Heart right ventricle (tissue), 16 donors: ENCODE measurements at regions of chr10 and their contacts with region 1.

Region 1: GRCh38 chr10:100433253-100434240 is 29.3 kb upstream of the WNT8B start:
- DNase-seq: peak; percentile 83 to 90
- ATAC-seq: peak; percentile 77 to 95 (median 90)
- H3K4me3 ChIP-seq: no peak overlapping the region
- H3K27ac ChIP-seq: no peak overlapping the region
- H3K4me1 ChIP-seq: no peaks in the 10 kb centered on the region
- H3K27me3 ChIP-seq: peaks cover 0 to 7% (median 0%) of the 10 kb centered on the region in 7 donors
- CTCF ChIP-seq: peak; percentile 97 to 100 (median 99)

Region 2: DNA sequence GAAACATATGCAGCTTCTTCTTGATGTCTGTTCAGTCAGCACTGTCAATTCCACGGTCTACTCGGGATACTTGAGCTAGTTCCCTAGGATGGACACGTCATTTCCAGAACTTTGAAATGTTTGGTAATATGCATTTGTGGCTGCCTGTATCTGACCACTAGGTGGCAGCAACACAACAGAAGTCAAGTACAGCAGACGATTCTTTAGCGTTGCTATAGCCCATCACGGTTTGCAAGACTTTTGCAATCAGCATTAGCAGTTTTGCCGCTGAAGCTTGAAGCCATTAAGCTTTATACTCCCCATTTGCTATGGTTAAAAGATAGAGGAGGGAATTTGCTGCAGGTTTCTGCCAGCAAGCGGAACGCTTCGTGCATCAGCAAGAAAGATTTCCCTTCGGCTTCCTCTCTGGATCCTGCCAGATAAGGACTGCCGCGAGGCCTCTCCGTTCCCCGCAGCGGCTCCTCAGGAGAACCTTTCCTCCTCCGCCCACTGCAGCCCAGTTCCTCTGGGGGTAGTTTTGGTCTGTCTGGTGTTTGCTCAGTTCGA is 587.6 kb before region 1 on chr10:
- intact Hi-C with region 1: no loop called
- DNase-seq: peak; percentile 34 to 82
- ATAC-seq: peak; percentile 85 to 97 (median 94)
- H3K4me3 ChIP-seq: peak overlapping the region; percentile 4 to 51 (median 35)
- H3K27ac ChIP-seq: no peak overlapping the region
- H3K4me1 ChIP-seq: peaks cover 0 to 12% (median 6%) of the 10 kb centered on the region in 9 donors
- H3K27me3 ChIP-seq: no peaks in the 10 kb centered on the region
- CTCF ChIP-seq: peak; percentile 89 to 95 (median 90)

Region 3: DNA sequence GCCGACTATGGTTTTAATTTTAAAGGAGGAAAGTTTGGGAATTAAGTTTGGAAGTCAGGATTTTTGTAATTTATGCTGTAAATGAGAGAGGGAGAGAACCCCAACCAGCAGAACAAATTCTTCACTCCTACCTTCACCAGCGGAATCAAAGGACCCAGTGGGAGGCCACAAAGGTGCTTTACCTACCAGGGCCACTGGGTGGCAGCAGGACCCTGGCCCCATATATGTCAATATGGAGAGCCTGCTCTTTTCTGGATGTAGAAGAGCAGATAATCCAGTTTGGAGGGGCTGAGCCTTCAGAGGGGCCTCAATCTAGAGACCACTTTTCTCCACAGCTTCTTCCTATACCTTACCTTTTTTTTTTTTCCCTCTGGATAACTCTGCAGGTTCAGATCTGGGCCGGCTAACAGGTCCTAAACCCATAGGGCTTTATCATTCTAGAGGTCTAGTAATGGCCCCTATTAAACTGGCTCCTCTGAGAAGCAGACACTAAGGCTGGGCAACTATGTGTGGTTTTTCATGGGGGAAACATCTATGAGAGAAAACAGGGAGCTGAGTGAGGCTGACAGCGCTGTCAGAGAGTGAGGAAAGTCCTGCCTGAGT is 95.0 kb before region 1 on chr10:
- intact Hi-C with region 1: loop called (anchors 1 to 2 kb)
- DNase-seq: peak; percentile 72 to 75
- ATAC-seq: peak; percentile 53 to 80 (median 74)
- H3K4me3 ChIP-seq: no peak overlapping the region
- H3K27ac ChIP-seq: no peak overlapping the region
- H3K4me1 ChIP-seq: peaks cover 0 to 28% (median 0%) of the 10 kb centered on the region in 9 donors
- H3K27me3 ChIP-seq: peaks cover 0 to 30% (median 16%) of the 10 kb centered on the region in 7 donors
- CTCF ChIP-seq: peak; percentile 86 to 95 (median 92)

Region 4: DNA sequence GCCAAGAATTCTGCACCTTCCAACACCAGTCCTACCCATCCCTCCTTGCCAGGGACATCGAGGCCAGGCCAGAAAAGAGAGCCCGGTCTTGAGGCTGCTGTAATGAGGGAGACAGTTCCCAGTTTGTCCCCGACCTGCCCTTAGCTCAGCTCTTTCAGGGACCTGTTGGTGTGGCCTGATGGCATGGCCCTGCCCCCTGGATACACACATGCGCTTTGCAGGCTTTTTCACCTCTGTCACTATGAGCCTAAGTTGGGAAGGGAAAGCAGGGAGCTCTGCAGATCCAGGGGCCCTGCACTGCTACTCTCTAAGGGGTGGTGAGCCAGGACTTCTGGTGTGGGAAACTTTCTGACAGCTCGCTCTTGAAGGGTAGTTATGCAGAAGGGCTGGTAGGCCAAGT is 84.5 kb before region 1 on chr10:
- intact Hi-C with region 1: no loop called
- DNase-seq: no peak
- ATAC-seq: no peak
- H3K4me3 ChIP-seq: no peak overlapping the region
- H3K27ac ChIP-seq: no peak overlapping the region
- H3K4me1 ChIP-seq: peaks cover 0 to 27% (median 19%) of the 10 kb centered on the region in 9 donors
- H3K27me3 ChIP-seq: peaks cover 0 to 40% (median 8%) of the 10 kb centered on the region in 7 donors
- CTCF ChIP-seq: no peak

Region 5: DNA sequence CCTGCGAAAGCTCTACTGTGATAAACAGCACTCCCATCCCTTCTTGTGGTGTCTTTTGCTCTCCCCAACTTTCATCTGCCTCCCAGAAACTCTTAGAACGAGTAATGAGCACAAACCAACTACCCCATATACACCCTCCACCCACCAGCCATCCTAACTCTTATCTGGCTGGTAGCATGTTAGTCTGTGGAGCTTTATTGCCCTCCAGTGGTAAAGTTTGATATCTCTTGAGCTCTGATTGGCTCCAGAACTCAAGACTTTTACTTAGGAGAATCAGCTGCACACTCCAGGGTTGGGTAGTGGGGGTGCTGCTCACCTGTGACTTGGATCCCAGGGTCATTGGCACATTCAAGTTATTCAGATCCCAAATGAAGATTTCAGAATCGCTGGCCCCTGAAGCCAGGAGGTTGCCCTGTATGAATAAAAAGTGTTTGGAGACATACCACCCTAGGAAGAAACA is 75.2 kb after region 1 on chr10:
- intact Hi-C with region 1: loop called in 3 of 10 experiments (anchors 10 kb)
- DNase-seq: no peak
- ATAC-seq: peak in 1 of 8 donors; percentile 16
- H3K4me3 ChIP-seq: no peak overlapping the region
- H3K27ac ChIP-seq: peak overlapping the region in 1 of 10 donors; percentile 57
- H3K4me1 ChIP-seq: peaks cover 0 to 35% (median 0%) of the 10 kb centered on the region in 9 donors
- H3K27me3 ChIP-seq: no peaks in the 10 kb centered on the region
- CTCF ChIP-seq: peak in 5 of 9 donors; percentile 17 to 52 (median 29)

Region 6: DNA sequence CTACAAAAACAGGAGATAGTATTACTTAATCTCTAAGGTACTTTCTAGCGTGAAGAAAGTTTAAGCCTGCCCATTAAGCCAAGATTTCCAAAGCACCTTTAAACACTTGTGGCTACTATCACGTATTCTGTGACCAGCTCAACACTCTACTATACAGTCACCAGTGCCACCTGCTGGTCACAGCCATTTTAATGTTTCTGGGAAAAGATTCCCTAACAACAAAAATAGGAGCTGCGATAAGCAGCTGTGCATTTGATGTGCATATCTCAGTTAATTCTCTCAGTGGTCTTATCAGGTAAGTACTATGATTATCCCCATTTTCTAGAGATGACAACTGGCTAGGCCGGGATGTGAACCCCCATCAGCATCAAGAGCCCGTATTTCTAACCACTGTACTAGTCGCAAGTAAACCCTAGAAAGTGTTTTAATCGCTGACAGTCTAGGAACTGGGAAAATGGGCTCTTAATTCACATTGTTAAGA is 85.3 kb after region 1 on chr10:
- intact Hi-C with region 1: loop called in 7 of 10 experiments (anchors 2 to 10 kb)
- DNase-seq: peak in 1 of 2 donors; percentile 65
- ATAC-seq: peak; percentile 58 to 86 (median 76)
- H3K4me3 ChIP-seq: peak overlapping the region; percentile 49 to 70 (median 58)
- H3K27ac ChIP-seq: peak overlapping the region in 9 of 10 donors; percentile 26 to 70 (median 56)
- H3K4me1 ChIP-seq: peaks cover 0 to 19% (median 14%) of the 10 kb centered on the region in 9 donors
- H3K27me3 ChIP-seq: peaks cover 0 to 13% (median 0%) of the 10 kb centered on the region in 7 donors
- CTCF ChIP-seq: peak; percentile 28 to 81 (median 72)